ENCODE measurements at regions of chr1 and their contacts with region 1.

Region 1: DNA sequence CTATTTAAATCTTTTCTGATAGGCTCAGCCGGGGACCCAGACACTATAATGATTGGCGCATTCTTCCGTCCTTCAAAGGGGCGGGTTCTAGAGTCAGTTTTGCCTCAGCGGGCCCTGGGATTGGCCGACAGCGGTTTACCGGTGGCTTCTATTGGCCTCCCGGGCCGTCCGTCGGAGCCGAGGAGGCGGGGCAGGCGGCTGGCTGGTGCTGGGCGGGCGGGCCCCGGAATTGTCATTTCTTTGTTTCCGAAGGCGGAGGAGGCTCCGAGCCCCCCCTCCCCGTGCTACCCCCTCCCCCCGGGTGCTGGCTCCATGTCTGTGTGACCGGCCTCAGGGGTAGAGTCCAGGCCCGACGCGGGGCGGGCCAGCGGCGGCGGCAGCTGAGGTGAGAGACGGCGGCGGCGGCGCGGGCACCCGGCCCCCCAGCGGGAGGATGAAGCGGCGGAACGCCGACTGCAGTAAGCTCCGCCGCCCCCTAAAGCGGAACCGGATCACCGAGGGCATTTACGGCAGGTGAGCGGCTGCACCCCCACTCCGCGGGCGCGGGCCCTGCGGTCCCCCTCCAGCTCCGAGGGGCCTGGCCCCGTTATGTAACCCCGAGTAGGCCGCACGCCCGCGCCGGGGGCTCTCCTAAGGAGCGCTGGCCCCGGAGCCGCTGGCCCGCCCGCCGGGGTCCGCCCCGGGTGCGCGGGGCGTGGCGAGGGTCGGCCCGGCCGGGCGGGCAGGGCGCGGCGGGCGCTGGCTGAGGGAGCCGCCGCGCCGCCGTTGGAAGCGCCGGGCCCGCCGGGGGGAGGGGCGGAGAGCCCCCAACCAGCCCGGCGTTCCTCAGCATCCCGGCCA is at the start of gene MACO1:
- DNase-seq: peak; percentile 95
- H3K4me3 Mint-ChIP-seq: peak within 1 kb of the TSS; percentile 96
- H3K27ac Mint-ChIP-seq: peak within 1 kb of the TSS; percentile 99
- H3K4me1 Mint-ChIP-seq: peaks cover 53% of the 10 kb centered on the region
- H3K27me3 Mint-ChIP-seq: no peaks in the 10 kb centered on the region
- total RNA-seq, gene MACO1: 15.8 and 15.9 TPM in 2 replicates

Region 2: GRCh38 chr1:25338188-25338981 is 92.5 kb before region 1 on chr1 and contains the start of gene TMEM50A:
- intact Hi-C with region 1: loop called (anchors 2 kb)
- DNase-seq: peak; percentile 94
- H3K4me3 Mint-ChIP-seq: peak within 1 kb of the TSS; percentile 97
- H3K27ac Mint-ChIP-seq: peak within 1 kb of the TSS; percentile 97
- H3K4me1 Mint-ChIP-seq: peaks cover 32% of the 10 kb centered on the region
- H3K27me3 Mint-ChIP-seq: no peaks in the 10 kb centered on the region
- total RNA-seq, gene TMEM50A: 113 and 116 TPM in 2 replicates

Region 3: GRCh38 chr1:25356848-25357247 is 74.0 kb before region 1 on chr1:
- intact Hi-C with region 1: loop called (anchors 5 kb)
- DNase-seq: no peak
- H3K4me3 Mint-ChIP-seq: peak overlapping the region; percentile 20
- H3K27ac Mint-ChIP-seq: peak overlapping the region; percentile 82
- H3K4me1 Mint-ChIP-seq: peaks cover 47% of the 10 kb centered on the region
- H3K27me3 Mint-ChIP-seq: no peaks in the 10 kb centered on the region

Region 4: GRCh38 chr1:25447547-25447946 is 16.7 kb after region 1 on chr1:
- intact Hi-C with region 1: loop called (anchors 1 kb)
- DNase-seq: peak; percentile 21
- H3K4me3 Mint-ChIP-seq: no peak overlapping the region
- H3K27ac Mint-ChIP-seq: peak overlapping the region; percentile 2
- H3K4me1 Mint-ChIP-seq: peaks cover 29% of the 10 kb centered on the region
- H3K27me3 Mint-ChIP-seq: no peaks in the 10 kb centered on the region

Region 5: DNA sequence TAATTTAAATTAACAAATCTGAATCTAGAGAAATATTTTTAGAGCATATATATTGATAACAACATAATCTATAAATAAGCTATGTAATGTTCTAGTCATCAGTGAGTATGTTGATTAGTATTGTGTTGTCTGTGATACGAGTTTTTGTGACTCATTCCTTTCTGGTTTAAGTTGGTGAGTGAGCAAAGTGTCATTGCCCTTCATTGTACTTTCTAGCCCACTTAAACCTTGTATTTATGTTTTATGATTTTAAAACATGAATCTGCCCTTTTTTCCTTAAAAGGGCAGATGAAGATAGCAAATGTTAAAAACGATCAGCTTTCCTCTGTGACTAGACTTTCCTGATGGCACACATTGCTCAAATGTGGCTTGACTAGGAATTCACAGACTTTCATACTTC is 38.3 kb after region 1 on chr1:
- intact Hi-C with region 1: loop called (anchors 5 kb)
- DNase-seq: no peak
- H3K4me3 Mint-ChIP-seq: no peak overlapping the region
- H3K27ac Mint-ChIP-seq: no peak overlapping the region
- H3K4me1 Mint-ChIP-seq: peaks cover 30% of the 10 kb centered on the region
- H3K27me3 Mint-ChIP-seq: no peaks in the 10 kb centered on the region

Region 6: GRCh38 chr1:25487628-25488027 is 56.7 kb after region 1 on chr1:
- intact Hi-C with region 1: loop called (anchors 5 kb)
- DNase-seq: no peak
- H3K4me3 Mint-ChIP-seq: no peak overlapping the region
- H3K27ac Mint-ChIP-seq: no peak overlapping the region
- H3K4me1 Mint-ChIP-seq: peaks cover 6% of the 10 kb centered on the region
- H3K27me3 Mint-ChIP-seq: no peaks in the 10 kb centered on the region

Region 7: GRCh38 chr1:25905680-25906643 is 475.1 kb after region 1 on chr1 and contains the start of gene STMN1:
- intact Hi-C with region 1: loop called (anchors 1 kb)
- DNase-seq: peak; percentile 83
- H3K4me3 Mint-ChIP-seq: peak within 1 kb of the TSS; percentile 93
- H3K27ac Mint-ChIP-seq: peak within 1 kb of the TSS; percentile 92
- H3K4me1 Mint-ChIP-seq: peaks cover 30% of the 10 kb centered on the region
- H3K27me3 Mint-ChIP-seq: peaks cover 15% of the 10 kb centered on the region
- total RNA-seq, gene STMN1: 334 and 341 TPM in 2 replicates